Naive thymus-derived CD4-positive, alpha-beta T cell (primary cell): ENCODE measurements at regions of chr6 and their contacts with region 1.

Region 1: DNA sequence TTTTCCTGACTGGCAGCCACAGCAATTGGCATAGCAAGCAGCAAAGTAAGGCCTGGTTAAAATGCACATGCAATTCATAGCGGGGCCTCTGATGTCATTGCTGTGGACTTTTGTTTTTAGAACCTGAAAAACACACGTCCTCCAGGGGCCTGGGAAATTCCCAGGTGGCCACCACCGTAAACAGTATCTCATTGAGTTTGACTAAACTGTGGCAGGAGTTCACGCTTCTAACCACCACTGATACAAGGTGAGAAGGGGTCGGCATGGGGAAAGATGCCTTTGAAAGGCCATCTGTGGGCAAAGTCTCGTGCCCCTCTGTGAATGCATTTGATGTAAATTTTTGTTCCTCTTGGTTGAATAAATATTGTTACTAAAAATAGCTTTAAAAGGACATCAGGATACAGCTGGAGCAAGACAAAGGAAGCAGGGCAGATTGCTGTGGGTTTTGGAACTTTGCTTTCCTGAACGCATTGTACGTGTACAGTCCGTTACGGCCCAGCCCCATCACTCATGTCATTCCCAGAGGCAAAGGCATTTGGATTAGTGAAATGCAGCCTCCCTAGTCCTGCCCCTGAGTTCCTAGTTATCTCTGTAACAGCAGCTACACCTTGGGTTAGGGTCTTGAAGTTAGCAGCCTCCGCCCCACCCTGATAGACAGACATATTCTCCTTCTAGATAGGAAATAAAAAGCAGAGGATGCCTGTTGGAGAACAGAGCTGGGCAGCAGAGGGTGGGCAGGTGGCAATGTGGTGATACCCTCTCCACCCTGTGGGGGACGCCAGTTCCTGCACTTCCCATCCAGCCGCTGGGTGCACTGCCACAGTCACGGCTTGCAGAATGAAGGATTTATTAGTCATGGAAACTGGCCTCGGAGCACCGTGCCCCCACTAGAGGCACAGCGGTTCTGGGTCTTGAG is 80.3 kb downstream of the ZDHHC14 start:
- DNase-seq: peak in 2 of 9 donors; percentile 2 to 72
- ATAC-seq: peak; percentile 71
- H3K4me3 ChIP-seq: no peak overlapping the region
- H3K4me3 Mint-ChIP-seq: peak overlapping the region in 1 of 10 donors; percentile 61
- H3K27ac ChIP-seq: no peak overlapping the region
- H3K27ac Mint-ChIP-seq: peak overlapping the region in 1 of 9 donors; percentile 88
- H3K4me1 ChIP-seq: peaks cover 3 to 10% of the 10 kb centered on the region in 2 donors
- H3K4me1 Mint-ChIP-seq: peaks cover 4 to 67% (median 5%) of the 10 kb centered on the region in 7 donors
- H3K27me3 ChIP-seq: no peaks in the 10 kb centered on the region
- H3K27me3 Mint-ChIP-seq: no peaks in the 10 kb centered on the region

Region 2: DNA sequence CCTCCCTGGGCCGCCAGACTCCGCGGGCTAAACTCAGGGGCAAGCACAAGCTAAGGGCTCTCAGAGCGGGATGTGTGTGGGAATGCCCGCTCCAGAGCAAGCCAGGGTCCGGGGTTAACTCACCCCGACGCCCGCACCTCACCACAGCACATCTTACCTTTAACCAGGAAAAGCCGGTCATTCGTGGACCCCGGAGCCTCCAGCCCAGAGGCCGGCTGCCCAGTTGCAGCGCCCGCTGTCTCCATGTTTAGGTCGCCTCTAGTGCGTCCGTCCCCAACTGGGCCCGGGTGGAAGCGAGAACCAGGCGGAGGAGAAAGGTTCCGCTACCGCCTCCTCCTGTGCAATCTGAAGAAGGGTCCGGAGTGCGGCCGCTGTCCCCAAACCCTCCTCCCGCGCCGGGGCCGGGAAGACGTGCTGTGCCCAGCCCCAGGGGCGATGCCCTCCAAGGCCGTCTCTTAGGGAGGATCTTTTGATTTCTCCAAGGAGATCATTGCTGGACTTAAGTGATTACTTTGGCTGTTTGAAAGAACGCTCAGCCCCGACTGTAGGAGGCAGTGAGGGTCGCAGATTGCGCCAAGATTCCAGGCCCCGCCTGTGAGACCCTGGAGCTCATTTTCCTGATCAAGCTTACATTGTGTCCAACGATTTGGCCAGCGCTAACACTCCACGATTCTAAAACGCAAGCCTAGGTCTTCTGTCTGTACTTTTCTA is 137.8 kb before region 1 on chr6 and contains the start of gene TMEM242:
- CTCF ChIA-PET with region 1: no interaction called
- POLR2A ChIA-PET with region 1: no interaction called
- intact Hi-C with region 1: loop called in 1 of 2 experiments (anchors 5 kb)
- DNase-seq: peak; percentile 68 to 93 (median 81)
- ATAC-seq: peak; percentile 98
- H3K4me3 ChIP-seq: peak within 1 kb of the TSS; percentile 95
- H3K4me3 Mint-ChIP-seq: peak within 1 kb of the TSS; percentile 93 to 99 (median 95)
- H3K27ac ChIP-seq: peak within 1 kb of the TSS; percentile 76
- H3K27ac Mint-ChIP-seq: peak within 1 kb of the TSS; percentile 78 to 93 (median 92)
- H3K4me1 ChIP-seq: peaks cover 8 to 12% of the 10 kb centered on the region in 2 donors
- H3K4me1 Mint-ChIP-seq: peaks cover 10 to 47% (median 24%) of the 10 kb centered on the region in 7 donors
- H3K27me3 ChIP-seq: no peaks in the 10 kb centered on the region
- H3K27me3 Mint-ChIP-seq: peaks cover 0 to 30% (median 10%) of the 10 kb centered on the region in 5 donors
- total RNA-seq, gene TMEM242: 11.6 to 15.6 (median 13.2) TPM

Region 3: DNA sequence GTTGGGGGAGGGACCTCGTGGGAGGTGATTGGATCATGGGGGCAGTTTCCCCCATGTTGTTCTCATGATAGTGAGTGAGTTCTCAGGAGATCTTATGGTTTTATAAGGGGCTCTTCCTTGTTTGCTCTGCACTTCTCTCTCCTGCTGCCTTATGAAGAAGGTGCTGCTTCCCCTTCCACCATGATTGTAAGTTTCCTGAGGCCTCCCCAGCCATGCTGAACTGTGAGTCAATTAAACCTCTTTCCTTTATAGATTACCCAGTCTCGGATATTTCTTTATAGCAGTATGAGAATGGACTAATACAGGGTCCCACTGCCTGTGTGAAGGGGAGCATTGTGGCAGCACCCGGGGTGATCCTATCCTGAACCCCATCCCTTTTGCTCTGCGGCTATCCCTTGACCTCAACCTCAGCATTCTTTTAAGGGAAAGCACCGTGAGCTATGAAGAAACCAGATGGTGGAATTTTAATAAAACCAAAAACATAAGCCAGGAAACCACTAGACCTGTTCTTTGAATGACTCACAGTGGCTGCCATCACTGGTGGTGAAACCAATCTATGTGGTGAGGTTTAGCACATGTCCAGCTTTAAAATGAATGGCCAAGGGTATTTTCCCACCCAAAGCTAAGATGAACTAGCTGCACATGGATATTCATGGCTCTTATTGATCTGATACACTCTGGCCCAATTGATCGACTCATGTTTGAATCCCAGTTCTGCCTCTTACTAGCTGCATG is 18.0 kb before region 1 on chr6:
- CTCF ChIA-PET with region 1: no interaction called
- POLR2A ChIA-PET with region 1: no interaction called
- intact Hi-C with region 1: loop called in 1 of 2 experiments (anchors 2 kb)
- DNase-seq: no peak
- ATAC-seq: no peak
- H3K4me3 ChIP-seq: no peak overlapping the region
- H3K4me3 Mint-ChIP-seq: no peak overlapping the region
- H3K27ac ChIP-seq: no peak overlapping the region
- H3K27ac Mint-ChIP-seq: peak overlapping the region in 1 of 9 donors; percentile 51
- H3K4me1 ChIP-seq: no peaks in the 10 kb centered on the region
- H3K4me1 Mint-ChIP-seq: peaks cover 0 to 11% (median 0%) of the 10 kb centered on the region in 7 donors
- H3K27me3 ChIP-seq: no peaks in the 10 kb centered on the region
- H3K27me3 Mint-ChIP-seq: no peaks in the 10 kb centered on the region

Region 4: GRCh38 chr6:157527471-157527907 is 66.2 kb after region 1 on chr6:
- CTCF ChIA-PET with region 1: no interaction called
- POLR2A ChIA-PET with region 1: no interaction called
- intact Hi-C with region 1: loop called in 1 of 2 experiments (anchors 2 kb)
- DNase-seq: peak in 6 of 9 donors; percentile 14 to 43 (median 31)
- ATAC-seq: peak; percentile 55
- H3K4me3 ChIP-seq: no peak overlapping the region
- H3K4me3 Mint-ChIP-seq: peak overlapping the region in 1 of 10 donors; percentile 44
- H3K27ac ChIP-seq: no peak overlapping the region
- H3K27ac Mint-ChIP-seq: peak overlapping the region in 2 of 9 donors; percentile 83
- H3K4me1 ChIP-seq: peaks cover 0 to 9% of the 10 kb centered on the region in 2 donors
- H3K4me1 Mint-ChIP-seq: peaks cover 13 to 50% (median 15%) of the 10 kb centered on the region in 7 donors
- H3K27me3 ChIP-seq: no peaks in the 10 kb centered on the region
- H3K27me3 Mint-ChIP-seq: no peaks in the 10 kb centered on the region

Region 5: GRCh38 chr6:157535339-157536222 is 74.3 kb after region 1 on chr6:
- CTCF ChIA-PET with region 1: no interaction called
- POLR2A ChIA-PET with region 1: no interaction called
- intact Hi-C with region 1: loop called in 1 of 2 experiments (anchors 2 kb)
- DNase-seq: peak in 1 of 9 donors; percentile 22
- ATAC-seq: peak; percentile 60
- H3K4me3 ChIP-seq: no peak overlapping the region
- H3K4me3 Mint-ChIP-seq: peak overlapping the region in 9 of 10 donors; percentile 25 to 76 (median 51)
- H3K27ac ChIP-seq: no peak overlapping the region
- H3K27ac Mint-ChIP-seq: peak overlapping the region; percentile 1 to 87 (median 45)
- H3K4me1 ChIP-seq: peaks cover 11 to 45% of the 10 kb centered on the region in 2 donors
- H3K4me1 Mint-ChIP-seq: peaks cover 22 to 61% (median 35%) of the 10 kb centered on the region in 7 donors
- H3K27me3 ChIP-seq: no peaks in the 10 kb centered on the region
- H3K27me3 Mint-ChIP-seq: no peaks in the 10 kb centered on the region

Region 6: DNA sequence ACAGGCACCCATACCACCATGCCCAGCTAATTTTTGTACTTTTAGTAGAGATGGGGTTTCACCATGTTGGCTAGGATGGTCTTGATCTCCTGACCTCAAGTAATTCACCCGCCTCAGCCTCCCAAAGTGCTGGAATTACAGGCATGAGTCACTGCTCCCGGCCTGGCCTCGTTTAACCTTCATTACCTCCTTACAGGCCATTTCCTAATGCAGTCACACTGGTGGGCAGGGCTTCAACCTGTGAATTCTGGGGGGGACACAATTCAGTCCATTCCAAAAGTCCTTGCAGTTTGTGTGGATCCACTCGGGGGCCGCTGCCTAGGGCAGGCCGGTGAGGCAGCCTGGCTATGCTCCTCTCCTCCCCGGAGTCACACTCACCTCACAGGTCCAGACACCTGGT is 249.3 kb after region 1 on chr6:
- CTCF ChIA-PET with region 1: no interaction called
- POLR2A ChIA-PET with region 1: no interaction called
- intact Hi-C with region 1: no loop called
- DNase-seq: no peak
- ATAC-seq: no peak
- H3K4me3 ChIP-seq: no peak overlapping the region
- H3K4me3 Mint-ChIP-seq: no peak overlapping the region
- H3K27ac ChIP-seq: no peak overlapping the region
- H3K27ac Mint-ChIP-seq: no peak overlapping the region
- H3K4me1 ChIP-seq: no peaks in the 10 kb centered on the region
- H3K4me1 Mint-ChIP-seq: peaks cover 0 to 1% (median 0%) of the 10 kb centered on the region in 7 donors
- H3K27me3 ChIP-seq: no peaks in the 10 kb centered on the region
- H3K27me3 Mint-ChIP-seq: no peaks in the 10 kb centered on the region

Region 7: DNA sequence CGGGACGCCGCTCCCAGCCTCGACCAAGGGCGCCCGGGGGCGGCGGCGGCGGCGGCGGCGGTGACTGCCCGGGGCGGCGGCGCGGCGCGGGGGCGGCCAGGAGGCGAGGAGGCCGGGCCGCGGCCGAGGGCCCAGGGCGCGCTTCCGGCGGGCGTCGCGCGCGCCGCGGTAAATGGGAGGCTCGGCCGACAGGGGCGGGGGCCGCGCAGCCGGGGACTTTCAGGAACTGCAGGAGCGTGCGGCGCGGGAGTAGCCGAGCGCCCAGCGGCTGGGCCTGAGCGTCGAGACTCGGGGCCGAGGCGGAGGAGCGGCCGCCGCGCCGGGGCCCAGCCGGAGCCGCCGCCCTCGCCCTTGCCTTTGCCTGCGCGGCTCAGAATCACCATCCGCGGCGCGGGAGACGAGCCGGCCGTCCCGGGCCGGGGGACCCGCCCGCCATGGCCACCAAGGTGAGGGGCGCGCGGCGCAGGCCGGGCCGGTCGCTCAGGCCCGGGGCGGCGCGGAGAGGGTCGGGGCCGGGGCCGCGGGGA is 361.8 kb after region 1 on chr6 and contains the start of gene SNX9:
- CTCF ChIA-PET with region 1: no interaction called
- POLR2A ChIA-PET with region 1: no interaction called
- intact Hi-C with region 1: loop called in 1 of 2 experiments (anchors 10 kb)
- DNase-seq: peak in 8 of 9 donors; percentile 27 to 74 (median 56)
- ATAC-seq: peak; percentile 77
- H3K4me3 ChIP-seq: peak within 1 kb of the TSS; percentile 60
- H3K4me3 Mint-ChIP-seq: peak within 1 kb of the TSS; percentile 88 to 100 (median 96)
- H3K27ac ChIP-seq: peak within 1 kb of the TSS; percentile 96
- H3K27ac Mint-ChIP-seq: peak within 1 kb of the TSS; percentile 95 to 100 (median 99)
- H3K4me1 ChIP-seq: peaks cover 9 to 16% of the 10 kb centered on the region in 2 donors
- H3K4me1 Mint-ChIP-seq: peaks cover 15 to 70% (median 57%) of the 10 kb centered on the region in 7 donors
- H3K27me3 ChIP-seq: no peaks in the 10 kb centered on the region
- H3K27me3 Mint-ChIP-seq: peaks cover 0 to 42% (median 0%) of the 10 kb centered on the region in 5 donors
- total RNA-seq, gene SNX9: 13.4 to 39.2 (median 36.4) TPM